ENCODE measurements at regions of chr11 and their contacts with region 1.

Region 1: GRCh38 chr11:121655537-121656327 is 203.0 kb upstream of the SORL1-AS1 start:
- DNase-seq: peak; percentile 82
- H3K4me3 Mint-ChIP-seq: peak overlapping the region; percentile 74
- H3K27ac Mint-ChIP-seq: peak overlapping the region; percentile 26
- H3K4me1 Mint-ChIP-seq: peaks cover 22% of the 10 kb centered on the region
- H3K27me3 Mint-ChIP-seq: peaks cover 6% of the 10 kb centered on the region

Region 2: GRCh38 chr11:121141066-121141465 is 514.7 kb before region 1 on chr11:
- CTCF ChIA-PET with region 1: no interaction called
- intact Hi-C with region 1: no loop called
- DNase-seq: no peak
- H3K4me3 Mint-ChIP-seq: no peak overlapping the region
- H3K27ac Mint-ChIP-seq: no peak overlapping the region
- H3K4me1 Mint-ChIP-seq: no peaks in the 10 kb centered on the region
- H3K27me3 Mint-ChIP-seq: no peaks in the 10 kb centered on the region

Region 3: GRCh38 chr11:121249039-121249663 is 406.6 kb before region 1 on chr11:
- CTCF ChIA-PET with region 1: no interaction called
- intact Hi-C with region 1: loop called (anchors 5 kb)
- DNase-seq: no peak
- H3K4me3 Mint-ChIP-seq: no peak overlapping the region
- H3K27ac Mint-ChIP-seq: no peak overlapping the region
- H3K4me1 Mint-ChIP-seq: no peaks in the 10 kb centered on the region
- H3K27me3 Mint-ChIP-seq: no peaks in the 10 kb centered on the region

Region 4: GRCh38 chr11:121431820-121432526 is 223.8 kb before region 1 on chr11:
- CTCF ChIA-PET with region 1: no interaction called
- intact Hi-C with region 1: loop called (anchors 5 kb)
- DNase-seq: no peak
- H3K4me3 Mint-ChIP-seq: no peak overlapping the region
- H3K27ac Mint-ChIP-seq: no peak overlapping the region
- H3K4me1 Mint-ChIP-seq: peaks cover 45% of the 10 kb centered on the region
- H3K27me3 Mint-ChIP-seq: no peaks in the 10 kb centered on the region

Region 5: DNA sequence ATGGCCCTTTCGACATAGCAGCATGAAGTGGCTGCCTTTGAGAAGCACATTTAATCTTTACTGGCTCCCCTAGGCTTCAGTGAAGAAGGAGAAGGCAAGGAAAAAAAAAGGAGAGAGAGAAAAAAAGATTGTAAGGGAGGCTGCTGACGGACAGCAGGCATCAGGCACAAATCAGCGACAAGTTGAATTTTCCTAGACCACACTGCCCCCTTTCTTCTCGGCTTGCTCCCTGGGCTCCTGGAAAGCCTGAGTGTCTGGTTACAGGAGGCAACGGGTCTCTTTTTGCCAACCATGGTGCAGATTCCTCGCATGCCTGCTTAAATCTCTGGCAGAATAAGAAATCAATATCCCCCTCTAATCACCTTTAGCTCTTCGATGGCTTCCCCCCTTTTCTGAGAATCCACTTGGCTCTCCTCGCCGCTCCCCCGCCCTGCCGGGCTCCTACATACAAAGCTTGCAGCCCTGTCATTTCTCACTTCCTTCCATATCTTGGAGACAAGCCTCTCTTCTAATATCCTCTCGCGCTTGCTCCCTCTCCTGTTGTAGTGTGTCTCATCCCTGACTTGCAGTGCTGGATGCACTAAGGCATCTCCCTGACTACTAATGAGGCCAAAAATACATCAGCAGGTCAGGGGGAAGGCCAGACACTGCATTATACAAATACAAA is 446.0 kb after region 1 on chr11:
- CTCF ChIA-PET with region 1: no interaction called
- intact Hi-C with region 1: loop called (anchors 1 kb)
- DNase-seq: no peak
- H3K4me3 Mint-ChIP-seq: no peak overlapping the region
- H3K27ac Mint-ChIP-seq: no peak overlapping the region
- H3K4me1 Mint-ChIP-seq: peaks cover 11% of the 10 kb centered on the region
- H3K27me3 Mint-ChIP-seq: peaks cover 29% of the 10 kb centered on the region

Region 6: DNA sequence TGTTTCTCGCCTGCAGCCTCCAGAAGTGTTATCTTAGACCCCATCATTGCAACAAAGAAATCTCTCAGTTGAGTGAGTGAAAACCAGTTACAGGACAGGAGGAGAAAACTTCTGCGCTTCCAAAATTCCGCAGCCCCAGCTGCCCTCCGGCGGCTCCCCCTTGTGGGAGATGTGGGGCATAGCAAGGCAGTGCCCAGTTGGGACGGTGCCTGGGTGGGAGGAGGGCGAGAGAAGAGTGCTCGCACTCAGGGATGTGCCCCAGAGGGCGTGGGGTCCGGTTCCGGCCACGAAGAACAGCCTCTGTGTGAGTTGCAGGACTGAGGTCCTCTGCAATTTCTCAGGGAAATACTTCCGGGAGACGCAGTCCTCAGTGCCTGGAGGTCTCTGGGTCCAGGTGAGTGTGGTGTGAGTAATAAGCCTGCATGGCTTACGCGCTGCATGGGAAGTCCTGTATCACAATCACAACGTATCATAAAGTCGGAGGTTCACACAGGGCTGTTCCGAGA is 547.3 kb after region 1 on chr11:
- CTCF ChIA-PET with region 1: interaction called, 13 read pairs
- intact Hi-C with region 1: loop called (anchors 1 kb)
- DNase-seq: peak; percentile 60
- H3K4me3 Mint-ChIP-seq: no peak overlapping the region
- H3K27ac Mint-ChIP-seq: no peak overlapping the region
- H3K4me1 Mint-ChIP-seq: no peaks in the 10 kb centered on the region
- H3K27me3 Mint-ChIP-seq: peaks cover 24% of the 10 kb centered on the region

Region 7: DNA sequence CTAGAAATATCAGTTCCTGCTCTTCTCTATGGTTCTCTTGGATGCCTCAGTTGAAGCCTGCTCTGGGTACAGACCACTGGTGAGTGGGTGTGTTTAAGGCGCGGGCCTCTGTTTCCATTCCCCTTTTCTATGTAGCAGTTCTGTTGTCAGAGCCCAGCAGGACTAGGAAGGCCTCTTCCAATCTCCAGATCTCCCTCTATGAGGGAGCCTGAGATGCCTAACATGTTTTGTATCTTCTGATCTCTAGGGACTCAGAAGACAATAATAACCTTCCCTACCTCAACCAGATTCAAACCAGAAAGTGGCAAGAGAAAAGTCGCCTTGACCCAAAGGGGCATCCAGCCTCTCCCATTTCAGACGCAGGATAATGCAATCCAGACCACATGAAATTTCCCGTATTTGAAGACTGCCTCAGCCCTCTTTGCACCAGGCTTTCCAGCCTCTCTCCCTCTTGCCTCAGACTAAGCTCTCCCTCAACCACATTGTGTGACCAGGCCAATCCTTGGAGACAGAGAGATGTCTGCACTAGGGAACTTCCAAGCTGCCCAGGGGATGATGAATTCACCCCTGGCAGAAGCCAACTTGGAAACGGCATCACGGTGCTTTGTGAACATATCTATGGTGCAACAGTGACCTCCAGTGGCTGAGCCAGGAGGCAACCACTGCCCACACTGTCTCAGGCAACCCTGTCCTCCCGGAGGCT is 849.7 kb after region 1 on chr11:
- CTCF ChIA-PET with region 1: interaction called, 6 read pairs
- intact Hi-C with region 1: loop called (anchors 1 kb)
- DNase-seq: peak; percentile 75
- H3K4me3 Mint-ChIP-seq: no peak overlapping the region
- H3K27ac Mint-ChIP-seq: no peak overlapping the region
- H3K4me1 Mint-ChIP-seq: no peaks in the 10 kb centered on the region
- H3K27me3 Mint-ChIP-seq: peaks cover 30% of the 10 kb centered on the region

Region 8: GRCh38 chr11:122578168-122578825 is 922.6 kb after region 1 on chr11:
- CTCF ChIA-PET with region 1: no interaction called
- intact Hi-C with region 1: loop called (anchors 2 kb)
- DNase-seq: peak; percentile 17
- H3K4me3 Mint-ChIP-seq: no peak overlapping the region
- H3K27ac Mint-ChIP-seq: no peak overlapping the region
- H3K4me1 Mint-ChIP-seq: peaks cover 7% of the 10 kb centered on the region
- H3K27me3 Mint-ChIP-seq: no peaks in the 10 kb centered on the region

Measured in activated naive CD4-positive, alpha-beta T cell treated with anti-CD3 and anti-CD28 coated beads for 36 hours (primary cell).